GM10248 (cell line): ENCODE measurements at regions of chr14 and their contacts with region 1.

Region 1: DNA sequence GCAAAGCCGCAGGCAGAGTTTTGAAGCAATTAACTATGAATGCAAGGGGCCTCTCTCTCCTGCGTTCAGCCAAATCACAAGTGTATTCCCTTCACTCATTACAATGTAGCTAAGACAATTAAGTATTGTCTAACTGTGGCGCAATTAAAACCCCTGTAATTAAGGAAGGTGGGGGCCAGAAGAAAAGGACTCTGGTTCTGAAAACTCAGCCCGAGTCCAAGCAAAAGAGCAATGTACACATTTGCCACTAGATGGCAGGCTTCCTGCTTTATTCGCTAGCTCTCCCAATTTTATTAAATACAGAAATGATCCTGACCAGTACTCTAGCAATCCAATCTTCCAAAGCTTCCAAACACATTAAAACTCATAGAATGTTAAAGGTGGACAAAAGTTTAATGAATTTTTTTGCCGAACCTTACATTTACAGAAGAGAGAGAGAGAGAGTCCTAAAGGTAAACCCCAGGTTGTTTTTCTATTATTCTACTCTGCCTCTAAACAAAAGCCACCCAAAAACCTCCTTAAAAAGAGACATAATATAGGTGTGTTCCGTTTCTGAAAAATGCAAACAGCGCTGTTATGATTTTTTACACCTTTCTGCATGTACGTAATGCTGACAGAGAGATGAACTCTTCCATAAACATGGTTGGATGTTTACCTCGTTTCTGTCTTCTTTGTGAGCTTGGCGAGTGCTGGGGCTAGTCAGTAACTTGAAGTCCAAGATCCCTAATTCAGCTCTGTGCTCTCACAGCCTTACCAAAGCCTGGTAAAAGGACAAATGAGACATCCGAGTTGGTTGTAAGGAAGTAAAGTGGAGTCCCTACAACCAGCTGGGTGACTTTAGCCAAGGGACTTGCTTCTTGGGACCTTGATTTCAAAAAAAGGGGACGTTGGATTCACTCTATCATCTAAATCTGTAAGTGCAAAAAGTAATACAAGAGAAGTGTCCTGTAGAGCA is 50.9 kb upstream of the VASH1 start:
- DNase-seq: peak; percentile 59
- CTCF ChIP-seq: peak; percentile 58

Region 2: DNA sequence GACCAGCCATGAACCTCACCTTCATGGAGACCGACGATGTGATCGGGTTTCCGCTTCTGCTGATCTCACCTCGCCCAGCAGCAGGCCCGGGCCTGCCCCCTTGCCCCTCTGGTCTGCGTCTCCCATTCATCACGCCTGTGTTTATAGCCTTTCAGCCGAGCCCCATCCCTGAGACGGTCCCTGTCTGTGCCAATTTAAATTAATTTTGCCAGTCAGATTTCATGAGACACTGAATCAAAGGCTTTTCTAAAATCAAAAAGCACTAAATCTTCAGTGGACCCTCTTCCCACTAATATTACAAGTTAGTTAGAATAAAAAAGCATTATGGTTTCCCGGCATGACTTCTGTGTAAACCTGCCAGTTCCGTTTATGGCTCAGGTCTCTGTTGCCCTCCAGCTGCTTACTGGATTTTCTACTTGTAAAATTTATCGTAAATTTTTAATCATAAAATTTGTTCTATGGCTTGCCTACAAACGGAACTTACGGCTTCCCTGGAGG is 178.5 kb before region 1 on chr14:
- CTCF ChIA-PET with region 1: no interaction called
- POLR2A ChIA-PET with region 1: no interaction called
- DNase-seq: no peak
- CTCF ChIP-seq: no peak

Region 3: GRCh38 chr14:76687611-76688382 is 22.5 kb before region 1 on chr14:
- CTCF ChIA-PET with region 1: interaction called, 11 read pairs
- POLR2A ChIA-PET with region 1: no interaction called
- DNase-seq: no peak
- CTCF ChIP-seq: no peak

Region 4: GRCh38 chr14:76720382-76720813 is 10.1 kb after region 1 on chr14:
- CTCF ChIA-PET with region 1: interaction called, 55 read pairs
- POLR2A ChIA-PET with region 1: no interaction called
- DNase-seq: peak; percentile 59
- CTCF ChIP-seq: no peak

Region 5: DNA sequence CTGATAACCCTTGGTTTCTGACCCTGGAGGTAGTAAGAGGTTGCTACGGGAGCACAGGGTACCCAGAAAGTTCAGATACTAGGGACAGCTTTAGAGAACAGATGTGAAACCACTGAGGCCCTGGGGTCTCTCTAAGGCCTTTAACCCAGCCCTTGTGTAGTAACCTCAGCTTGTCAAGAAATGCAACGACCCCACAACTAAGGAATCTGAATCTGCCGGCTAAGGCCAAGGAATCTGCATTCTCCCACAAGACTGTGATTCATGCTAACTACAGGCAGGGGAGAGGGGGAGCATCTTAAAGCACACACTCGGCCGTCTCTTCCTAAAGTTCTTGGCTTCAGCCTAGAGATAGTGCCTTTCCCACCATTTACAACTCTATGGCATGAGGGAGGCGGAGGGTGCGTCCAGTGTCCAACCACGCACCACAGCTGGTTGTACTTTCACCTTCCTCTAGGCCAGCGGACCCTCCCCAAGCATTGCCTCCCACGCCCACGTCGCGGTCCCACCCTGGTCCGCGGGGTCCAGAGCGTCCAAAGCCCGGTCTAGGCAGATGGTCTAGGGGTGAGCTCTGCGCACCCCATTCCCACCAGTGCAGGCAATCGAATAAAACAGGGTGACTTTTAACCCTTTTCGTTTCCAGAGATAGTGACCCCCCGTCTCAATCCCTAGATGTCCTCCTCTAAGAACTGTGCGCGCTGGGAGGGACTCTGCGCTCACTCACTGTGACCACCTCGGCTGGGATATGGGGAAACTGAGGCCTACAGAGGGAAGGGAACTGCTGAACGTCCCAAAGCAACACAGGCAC is 50.2 kb after region 1 on chr14:
- CTCF ChIA-PET with region 1: interaction called, 13 read pairs
- POLR2A ChIA-PET with region 1: no interaction called
- DNase-seq: no peak
- CTCF ChIP-seq: no peak

Region 6: DNA sequence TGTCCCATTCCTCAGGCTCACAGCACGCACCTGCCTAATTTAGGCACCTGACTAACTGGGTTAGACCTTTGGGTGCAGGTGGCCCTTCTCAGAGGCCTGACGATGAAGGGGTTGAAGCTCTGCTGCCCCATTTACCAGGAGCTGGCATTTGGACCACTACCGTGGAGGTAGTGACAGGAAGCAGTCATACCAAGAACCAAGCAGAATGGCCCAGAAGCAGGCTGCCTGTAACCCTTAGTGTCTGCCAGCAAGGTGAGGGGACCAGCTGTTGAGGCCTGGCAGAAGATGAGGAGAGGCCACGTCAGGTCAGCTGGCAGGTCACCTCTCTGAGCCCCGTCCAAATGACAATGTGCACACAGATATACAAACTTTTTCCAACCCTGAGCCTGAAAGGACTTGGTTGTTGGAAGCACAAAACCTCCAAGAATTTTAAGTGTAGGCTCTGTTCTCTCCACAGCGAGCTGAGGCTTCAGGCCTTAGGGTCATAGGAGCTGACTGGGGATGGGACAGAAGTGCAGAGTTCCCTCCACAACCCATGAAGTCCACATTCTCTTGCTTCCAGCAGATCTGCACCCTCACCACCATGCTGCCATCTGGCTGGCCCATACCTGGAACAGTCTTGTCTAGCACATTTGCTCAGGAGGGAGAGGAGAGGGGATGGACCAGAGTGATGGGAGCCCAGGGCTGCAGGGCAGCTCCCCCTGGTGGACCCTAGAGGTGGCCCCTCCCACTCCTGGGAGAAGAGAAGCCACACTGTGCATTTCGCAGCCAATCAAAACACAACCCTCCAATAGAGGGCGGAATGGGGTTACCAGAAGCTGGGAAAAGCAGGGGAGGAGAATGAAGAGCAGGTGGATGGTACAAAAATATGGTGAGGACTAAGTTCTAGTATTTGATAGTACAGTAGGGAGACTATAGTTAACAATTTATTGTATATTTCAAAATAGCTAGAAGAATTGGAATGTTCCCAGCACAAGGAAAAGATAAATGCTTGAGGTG is 74.2 kb after region 1 on chr14:
- CTCF ChIA-PET with region 1: interaction called, 122 read pairs
- POLR2A ChIA-PET with region 1: no interaction called
- DNase-seq: peak; percentile 82
- CTCF ChIP-seq: peak; percentile 65

Region 7: GRCh38 chr14:76812211-76813044 is 102.1 kb after region 1 on chr14 and contains the start of gene ANGEL1:
- CTCF ChIA-PET with region 1: interaction called, 39 read pairs
- POLR2A ChIA-PET with region 1: no interaction called
- DNase-seq: peak; percentile 93
- CTCF ChIP-seq: no peak